ENCODE measurements at regions of chr16 and their contacts with region 1.

Region 1: DNA sequence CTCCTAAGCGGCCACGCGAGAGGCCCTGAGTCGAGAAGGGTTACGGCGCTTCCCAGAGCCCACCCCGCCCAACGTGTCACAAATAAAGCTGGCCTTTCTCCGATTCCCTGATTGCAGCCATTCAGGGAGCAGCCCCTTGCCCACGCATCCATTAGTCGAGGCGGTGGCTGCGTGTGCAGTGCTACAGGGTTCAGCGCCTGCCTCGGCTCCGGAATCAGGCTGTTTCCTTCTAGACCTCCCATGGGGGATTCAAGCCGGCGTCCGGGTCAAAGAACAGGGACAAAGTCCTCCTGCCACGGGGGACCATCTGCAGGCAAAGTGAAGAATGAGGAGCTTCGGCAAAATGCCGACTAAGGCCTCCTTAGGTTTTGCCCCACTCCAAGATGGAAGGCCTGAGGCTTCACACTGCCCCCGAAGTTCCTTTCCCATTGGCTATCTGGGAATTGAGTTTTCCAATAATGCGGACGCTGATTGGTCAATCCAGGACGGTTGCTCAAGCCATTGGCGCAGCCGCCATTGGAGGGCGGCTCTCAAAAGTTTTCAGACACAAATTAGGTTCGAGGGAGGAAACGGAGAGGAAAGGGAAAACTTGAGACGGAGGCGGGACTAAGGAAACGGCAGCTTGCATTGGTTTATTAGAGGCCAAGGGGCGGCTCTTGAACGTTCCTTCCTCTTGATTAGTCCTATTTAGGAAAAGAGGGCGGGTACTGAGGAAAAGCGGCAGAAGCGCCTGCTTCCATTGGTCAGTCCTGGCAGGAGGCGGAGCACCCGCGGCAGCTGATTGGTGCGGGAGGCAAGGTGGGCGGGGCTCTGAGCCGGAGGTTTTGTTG is 430 bp upstream of the KATNB1 start:
- DNase-seq: peak; percentile 96
- ATAC-seq: peak; percentile 88
- H3K4me3 Mint-ChIP-seq: peak overlapping the region; percentile 99
- H3K27ac Mint-ChIP-seq: peak overlapping the region; percentile 96
- H3K4me1 Mint-ChIP-seq: peaks cover 19% of the 10 kb centered on the region
- H3K27me3 Mint-ChIP-seq: no peaks in the 10 kb centered on the region

Region 2: DNA sequence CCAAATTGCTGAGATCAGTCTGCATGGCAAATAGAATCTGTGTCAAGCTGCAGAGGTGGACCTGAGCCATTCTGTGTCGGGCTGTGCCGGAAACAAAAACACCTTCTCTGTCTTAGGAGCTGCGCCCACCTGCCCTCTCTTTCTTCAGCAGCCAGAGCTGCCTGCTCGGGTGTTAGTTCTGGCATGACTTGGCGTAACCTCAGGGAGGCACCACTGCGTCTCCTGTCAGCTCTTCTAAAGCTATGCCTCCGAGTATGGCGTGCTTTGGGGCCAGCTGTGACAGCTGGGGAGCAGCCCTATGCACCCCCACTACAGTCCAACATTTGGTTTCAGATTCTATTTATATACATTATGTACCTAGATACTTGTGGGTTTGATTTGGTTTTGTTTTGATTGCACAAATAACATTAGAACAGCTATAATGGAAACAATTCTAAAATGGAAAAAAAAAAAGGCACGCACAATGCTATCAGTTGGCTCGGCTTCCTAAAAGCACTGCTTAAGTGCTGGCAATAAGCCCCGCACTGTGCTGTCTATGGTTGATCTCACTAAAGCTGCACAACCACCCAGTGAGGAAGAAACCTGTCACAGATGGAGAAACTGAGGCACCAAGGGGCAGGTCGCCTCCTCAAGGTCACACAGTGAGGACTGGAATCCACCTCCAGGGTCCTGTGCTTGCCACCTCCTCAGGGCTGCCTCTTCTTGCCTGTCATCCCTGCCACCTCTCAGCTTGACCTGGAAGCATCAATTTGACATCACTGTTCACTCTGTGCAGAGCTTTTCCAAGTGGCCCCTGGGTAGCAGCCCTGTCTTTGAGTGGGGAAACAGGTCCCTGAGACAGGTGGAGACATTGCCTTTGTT is 125.4 kb before region 1 on chr16:
- POLR2A ChIA-PET with region 1: interaction called, 12 read pairs
- DNase-seq: peak; percentile 66
- ATAC-seq: peak; percentile 93
- H3K4me3 Mint-ChIP-seq: peak overlapping the region; percentile 67
- H3K27ac Mint-ChIP-seq: peak overlapping the region; percentile 93
- H3K4me1 Mint-ChIP-seq: peaks cover 51% of the 10 kb centered on the region
- H3K27me3 Mint-ChIP-seq: no peaks in the 10 kb centered on the region

Region 3: GRCh38 chr16:57689762-57690558 is 45.2 kb before region 1 on chr16:
- POLR2A ChIA-PET with region 1: interaction called, 19 read pairs
- DNase-seq: peak; percentile 75
- ATAC-seq: peak; percentile 92
- H3K4me3 Mint-ChIP-seq: peak overlapping the region; percentile 82
- H3K27ac Mint-ChIP-seq: peak overlapping the region; percentile 94
- H3K4me1 Mint-ChIP-seq: peaks cover 39% of the 10 kb centered on the region
- H3K27me3 Mint-ChIP-seq: peaks cover 6% of the 10 kb centered on the region

Region 4: DNA sequence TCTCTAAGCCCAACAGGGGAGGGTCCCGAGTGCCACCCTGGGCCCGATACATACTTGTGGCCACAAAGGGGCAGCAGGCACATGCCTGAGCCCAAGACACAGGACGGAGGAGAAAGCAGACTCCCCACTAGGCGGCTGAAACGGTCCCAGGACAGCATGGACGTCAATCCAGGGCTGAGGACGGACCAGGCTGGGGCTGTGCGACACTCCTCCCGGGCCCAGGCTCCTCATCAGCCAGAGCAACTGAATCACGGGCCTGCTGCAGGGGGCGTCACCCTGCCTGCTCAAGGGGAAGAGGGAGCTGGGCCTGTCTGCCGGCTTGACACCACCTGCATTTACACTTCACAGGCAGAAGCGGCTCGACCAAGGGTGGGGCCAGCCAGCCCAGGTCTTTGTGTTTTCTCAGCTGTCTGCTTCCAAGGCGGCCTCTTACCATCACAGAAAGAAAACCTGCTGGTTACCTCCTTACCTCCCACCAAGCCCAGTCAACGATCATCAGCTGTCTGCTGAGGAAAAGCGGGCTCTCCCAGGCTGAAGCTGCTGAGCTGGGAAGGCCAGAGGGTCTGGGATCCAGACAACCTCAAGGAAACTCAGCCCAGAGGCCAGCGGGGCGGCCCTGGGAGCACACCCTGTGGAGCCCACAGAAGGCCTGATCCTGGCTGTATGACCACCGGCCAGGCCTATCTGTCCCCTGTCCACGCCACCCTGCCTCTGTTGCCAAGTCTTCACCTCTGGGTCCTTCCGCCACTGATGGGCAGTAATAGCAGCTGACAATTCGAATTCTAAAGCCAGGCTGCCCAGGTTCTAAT is 40.7 kb after region 1 on chr16:
- POLR2A ChIA-PET with region 1: no interaction called
- DNase-seq: no peak
- ATAC-seq: no peak
- H3K4me3 Mint-ChIP-seq: no peak overlapping the region
- H3K27ac Mint-ChIP-seq: no peak overlapping the region
- H3K4me1 Mint-ChIP-seq: no peaks in the 10 kb centered on the region
- H3K27me3 Mint-ChIP-seq: peaks cover 3% of the 10 kb centered on the region

Measured in activated naive CD8-positive, alpha-beta T cell treated with anti-CD3 and anti-CD28 coated beads, Interleukin-2, amount 10 ng/mL, durations not matched to agents 7 days and 5 days (primary cell).